ENCODE measurements at regions of chr14 and their contacts with region 1.

Region 1: GRCh38 chr14:103715052-103716000 is at the starts of genes XRCC3 and ZFYVE21:
- DNase-seq: peak; percentile 100
- ATAC-seq: peak; percentile 95
- H3K4me3 ChIP-seq: peak within 1 kb of the TSS; percentile 12 to 82 (median 60)
- H3K4me3 Mint-ChIP-seq: peak within 1 kb of the TSS; percentile 91
- H3K27ac ChIP-seq: peak within 1 kb of the TSS in 1 of 2 donors; percentile 55
- H3K27ac Mint-ChIP-seq: peak within 1 kb of the TSS; percentile 85
- H3K4me1 ChIP-seq: peaks cover 15 to 24% of the 10 kb centered on the region in 2 donors
- H3K4me1 Mint-ChIP-seq: peaks cover 36% of the 10 kb centered on the region
- H3K27me3 ChIP-seq: no peaks in the 10 kb centered on the region
- H3K27me3 Mint-ChIP-seq: no peaks in the 10 kb centered on the region
- CTCF ChIP-seq: no peak
- total RNA-seq, gene XRCC3: 18.0 and 18.6 TPM in 2 replicates
- total RNA-seq, gene ZFYVE21: 18.6 and 24.3 TPM in 2 replicates

Region 2: GRCh38 chr14:103528587-103529382 is 186.5 kb before region 1 on chr14 and contains the start of gene TRMT61A:
- CTCF ChIA-PET with region 1: interaction called, 3 read pairs
- POLR2A ChIA-PET with region 1: no interaction called
- intact Hi-C with region 1: loop called (anchors 2 kb)
- DNase-seq: peak; percentile 85
- ATAC-seq: peak; percentile 42
- H3K4me3 ChIP-seq: peak within 1 kb of the TSS; percentile 53 to 94 (median 86)
- H3K4me3 Mint-ChIP-seq: peak within 1 kb of the TSS; percentile 88
- H3K27ac ChIP-seq: peak within 1 kb of the TSS; percentile 73 to 84
- H3K27ac Mint-ChIP-seq: peak within 1 kb of the TSS; percentile 96
- H3K4me1 ChIP-seq: peaks cover 33 to 49% of the 10 kb centered on the region in 2 donors
- H3K4me1 Mint-ChIP-seq: peaks cover 50% of the 10 kb centered on the region
- H3K27me3 ChIP-seq: peaks cover 0 to under 1% (median under 1%) of the 10 kb centered on the region in 4 experiments
- H3K27me3 Mint-ChIP-seq: no peaks in the 10 kb centered on the region
- CTCF ChIP-seq: no peak
- total RNA-seq, gene TRMT61A: 9.5 and 12.3 TPM in 2 replicates

Region 3: GRCh38 chr14:103688906-103689902 is 26.1 kb before region 1 on chr14:
- CTCF ChIA-PET with region 1: no interaction called
- POLR2A ChIA-PET with region 1: no interaction called
- intact Hi-C with region 1: loop called (anchors 1 kb)
- DNase-seq: peak; percentile 40
- ATAC-seq: peak; percentile 57
- H3K4me3 ChIP-seq: peak overlapping the region in 2 of 5 experiments; percentile 6 to 26
- H3K4me3 Mint-ChIP-seq: peak overlapping the region; percentile 82
- H3K27ac ChIP-seq: peak overlapping the region in 1 of 2 donors; percentile 62
- H3K27ac Mint-ChIP-seq: peak overlapping the region; percentile 88
- H3K4me1 ChIP-seq: peaks cover 41 to 43% of the 10 kb centered on the region in 2 donors
- H3K4me1 Mint-ChIP-seq: peaks cover 38% of the 10 kb centered on the region
- H3K27me3 ChIP-seq: no peaks in the 10 kb centered on the region
- H3K27me3 Mint-ChIP-seq: no peaks in the 10 kb centered on the region
- CTCF ChIP-seq: no peak

Region 4: DNA sequence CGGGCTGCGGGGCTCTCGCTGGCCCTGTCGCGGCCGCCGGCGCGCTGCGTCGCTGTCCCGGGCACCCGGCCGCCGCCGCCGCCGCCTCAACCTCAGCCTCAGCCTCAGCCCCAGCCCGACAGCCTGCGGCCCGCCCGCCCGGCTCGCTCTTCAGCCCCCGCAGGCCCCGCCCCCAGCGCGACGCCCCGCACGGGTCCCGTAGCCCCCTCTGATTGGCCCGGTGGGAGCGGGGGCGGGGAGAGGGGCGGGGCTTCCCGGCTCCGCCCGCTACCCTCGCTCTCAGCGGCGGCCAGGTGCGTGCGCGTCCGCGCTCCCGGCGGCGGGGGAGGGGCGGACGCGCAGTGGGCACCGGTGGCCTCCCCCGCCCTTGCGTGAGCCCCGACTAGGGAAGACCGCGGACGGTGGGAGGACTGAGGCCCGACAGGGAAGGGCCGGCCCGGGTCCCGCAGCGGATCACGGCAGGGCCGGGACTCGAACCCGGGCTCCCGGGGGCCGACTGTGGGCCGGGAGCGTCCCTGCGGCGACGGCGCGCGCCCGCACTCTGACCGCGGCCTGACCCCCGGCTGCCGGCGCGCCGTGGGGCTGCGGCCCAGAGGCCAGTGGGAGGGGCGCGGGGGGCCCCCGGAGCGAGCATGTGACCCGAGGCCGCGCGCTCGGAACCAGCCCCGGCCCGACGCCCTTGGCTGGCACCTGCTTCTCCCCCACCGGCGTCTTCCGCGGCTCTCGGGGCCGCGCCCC is 132.3 kb after region 1 on chr14 and contains the start of gene PPP1R13B:
- CTCF ChIA-PET with region 1: no interaction called
- POLR2A ChIA-PET with region 1: no interaction called
- intact Hi-C with region 1: loop called (anchors 1 kb)
- DNase-seq: peak; percentile 95
- ATAC-seq: peak; percentile 97
- H3K4me3 ChIP-seq: peak within 1 kb of the TSS; percentile 44 to 73 (median 60)
- H3K4me3 Mint-ChIP-seq: peak within 1 kb of the TSS; percentile 91
- H3K27ac ChIP-seq: peak within 1 kb of the TSS in 1 of 2 donors; percentile 59
- H3K27ac Mint-ChIP-seq: peak within 1 kb of the TSS; percentile 83
- H3K4me1 ChIP-seq: peaks cover 10 to 14% of the 10 kb centered on the region in 2 donors
- H3K4me1 Mint-ChIP-seq: peaks cover 16% of the 10 kb centered on the region
- H3K27me3 ChIP-seq: no peaks in the 10 kb centered on the region
- H3K27me3 Mint-ChIP-seq: no peaks in the 10 kb centered on the region
- CTCF ChIP-seq: no peak
- total RNA-seq, gene PPP1R13B: 27.7 and 38.6 TPM in 2 replicates